SK-N-SH (cell line): ENCODE measurements at regions of chr3 and their contacts with region 1.

Region 1: DNA sequence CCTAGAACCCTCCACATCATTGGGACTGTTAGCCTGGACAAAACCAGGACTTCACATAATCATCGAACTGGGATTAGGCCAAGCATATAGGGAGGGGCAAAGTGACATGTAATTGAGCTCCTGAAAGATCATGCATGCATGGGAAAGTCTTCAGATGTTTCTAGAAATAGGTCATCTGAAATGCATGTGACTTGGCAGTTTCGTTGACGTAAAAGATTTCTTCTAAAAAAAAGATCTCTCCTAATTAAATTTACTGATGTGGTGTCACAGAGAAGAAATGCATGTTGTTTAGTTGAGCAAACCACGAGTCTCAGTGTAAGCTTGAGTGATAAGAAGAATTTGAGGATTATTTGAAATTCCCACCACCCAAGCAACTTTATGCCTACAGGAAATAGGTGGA is 70.0 kb upstream of the LIMD1 start:
- DNase-seq: no peak
- H3K4me3 ChIP-seq: no peak overlapping the region
- H3K27ac ChIP-seq: peak overlapping the region in 1 of 2 experiments; percentile 24; a peak in 1 of 4 replicates
- H3K4me1 ChIP-seq: 0 out of 4 replicates have a peak, but pooled peaks cover 0 to 11% of the 10 kb centered on the region in 2 experiments
- H3K27me3 ChIP-seq: no peaks in the 10 kb centered on the region
- CTCF ChIP-seq: no peak
- EP300 ChIP-seq: no peak
- RAD21 ChIP-seq: no peak

Region 2: DNA sequence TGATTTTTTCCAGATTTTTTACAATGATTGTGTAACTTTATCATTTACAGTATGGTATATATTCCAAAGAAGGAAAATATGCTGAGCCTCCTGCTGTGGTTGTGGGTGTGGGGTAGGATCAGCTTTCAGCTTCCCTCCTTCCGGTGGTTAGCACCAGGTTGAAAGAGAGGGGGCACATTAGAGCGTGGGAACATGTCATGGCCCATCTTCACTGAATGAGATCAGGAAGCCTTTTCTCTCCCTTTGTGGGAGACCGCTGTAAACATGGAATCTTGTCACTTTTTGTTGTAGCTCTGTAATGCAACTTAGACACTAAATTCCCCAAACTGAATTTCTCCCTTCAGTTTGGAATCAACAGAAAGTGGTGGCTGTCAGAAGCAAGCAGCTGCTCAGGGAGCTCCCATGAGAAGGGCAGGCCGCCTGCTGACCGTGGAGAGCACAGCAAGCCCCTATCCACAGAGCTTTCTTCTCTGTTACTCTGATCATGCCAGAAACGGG is 16.7 kb before region 1 on chr3:
- CTCF ChIA-PET with region 1: interaction called, 22 read pairs
- POLR2A ChIA-PET with region 1: interaction called, 3 read pairs
- DNase-seq: peak; percentile 30
- H3K4me3 ChIP-seq: peak overlapping the region in 1 of 2 experiments; percentile 5; a peak in 1 of 4 replicates
- H3K27ac ChIP-seq: peak overlapping the region in 1 of 2 experiments; percentile 76; a peak in 2 of 4 replicates
- H3K4me1 ChIP-seq: peaks cover 2 to 30% of the 10 kb centered on the region in 2 experiments; a peak in 3 of 4 replicates
- H3K27me3 ChIP-seq: no peaks in the 10 kb centered on the region
- CTCF ChIP-seq: peak; percentile 48
- EP300 ChIP-seq: no peak
- RAD21 ChIP-seq: peak; percentile 43

Region 3: GRCh38 chr3:45546716-45547701 is 22.4 kb after region 1 on chr3:
- CTCF ChIA-PET with region 1: no interaction called
- POLR2A ChIA-PET with region 1: no interaction called
- DNase-seq: no peak
- H3K4me3 ChIP-seq: no peak overlapping the region
- H3K27ac ChIP-seq: peak overlapping the region in 1 of 2 experiments; percentile 73; a peak in 2 of 4 replicates
- H3K4me1 ChIP-seq: peaks cover 23 to 24% of the 10 kb centered on the region in 2 experiments; a peak in 3 of 4 replicates
- H3K27me3 ChIP-seq: no peaks in the 10 kb centered on the region
- CTCF ChIP-seq: peak; percentile 52
- EP300 ChIP-seq: no peak
- RAD21 ChIP-seq: no peak

Region 4: DNA sequence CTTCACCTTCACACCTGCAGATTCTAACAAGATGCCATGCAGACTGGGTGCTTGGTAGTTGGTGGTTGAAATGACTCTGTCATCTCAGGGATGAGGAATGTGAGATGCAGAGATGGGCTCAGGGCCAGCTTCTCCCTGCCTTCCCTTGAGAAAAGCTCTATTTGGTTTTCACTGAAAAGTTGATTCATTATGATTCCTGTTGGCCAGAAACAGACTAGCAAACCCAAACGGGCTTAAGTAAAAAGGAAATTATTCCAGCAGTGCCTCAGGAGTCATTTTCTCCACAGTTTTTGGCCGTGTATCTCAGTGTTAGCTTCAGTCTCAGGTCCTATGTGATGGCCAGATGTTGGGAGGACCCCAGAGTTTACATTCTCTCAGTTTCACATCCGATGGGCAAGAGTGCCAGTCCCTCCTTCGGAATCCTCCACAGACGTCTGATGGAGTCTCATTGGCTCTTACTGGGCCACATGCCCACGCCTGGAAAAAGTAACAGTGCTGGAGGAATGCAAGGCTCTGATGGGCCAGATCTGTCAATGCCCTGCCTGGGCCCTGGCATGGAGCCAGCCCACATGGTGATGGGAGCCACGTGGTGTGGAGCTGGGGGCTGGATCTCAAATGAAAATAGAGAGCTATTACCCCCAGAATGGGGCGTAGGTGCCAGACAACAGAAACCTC is 142.3 kb after region 1 on chr3:
- CTCF ChIA-PET with region 1: no interaction called
- POLR2A ChIA-PET with region 1: no interaction called
- DNase-seq: peak; percentile 42
- H3K4me3 ChIP-seq: no peak overlapping the region; a peak in 2 of 4 replicates
- H3K27ac ChIP-seq: peak overlapping the region; percentile 56 to 97; a peak in 3 of 4 replicates
- H3K4me1 ChIP-seq: peaks cover 13 to 33% of the 10 kb centered on the region in 2 experiments; a peak in 3 of 4 replicates
- H3K27me3 ChIP-seq: no peaks in the 10 kb centered on the region
- CTCF ChIP-seq: no peak
- EP300 ChIP-seq: peak in 1 of 2 experiments; percentile 67; a peak in 1 of 4 replicates
- RAD21 ChIP-seq: no peak